ENCODE measurements at regions of chr1 and their contacts with region 1.

Region 1: GRCh38 chr1:207336559-207337467 is 15.3 kb downstream of the CD55 start:
- DNase-seq: peak; percentile 20 to 39 (median 32)
- H3K4me3 ChIP-seq: no peak overlapping the region
- H3K4me3 Mint-ChIP-seq: peak overlapping the region; percentile 7 to 75 (median 52)
- H3K27ac ChIP-seq: peak overlapping the region; percentile 37
- H3K27ac Mint-ChIP-seq: peak overlapping the region; percentile 49 to 90 (median 83)
- H3K4me1 ChIP-seq: peaks cover 44% of the 10 kb centered on the region
- H3K4me1 Mint-ChIP-seq: peaks cover 43 to 67% (median 57%) of the 10 kb centered on the region in 4 donors
- H3K27me3 ChIP-seq: no peaks in the 10 kb centered on the region
- H3K27me3 Mint-ChIP-seq: no peaks in the 10 kb centered on the region

Region 2: GRCh38 chr1:207084701-207085180 is 252.1 kb before region 1 on chr1:
- CTCF ChIA-PET with region 1: no interaction called
- POLR2A ChIA-PET with region 1: no interaction called
- intact Hi-C with region 1: loop called (anchors 1 kb)
- DNase-seq: peak; percentile 53 to 62 (median 58)
- H3K4me3 ChIP-seq: no peak overlapping the region
- H3K4me3 Mint-ChIP-seq: no peak overlapping the region
- H3K27ac ChIP-seq: no peak overlapping the region
- H3K27ac Mint-ChIP-seq: peak overlapping the region in 2 of 7 donors; percentile 17 to 25
- H3K4me1 ChIP-seq: no peaks in the 10 kb centered on the region
- H3K4me1 Mint-ChIP-seq: peaks cover 6 to 11% (median 9%) of the 10 kb centered on the region in 4 donors
- H3K27me3 ChIP-seq: no peaks in the 10 kb centered on the region
- H3K27me3 Mint-ChIP-seq: peaks cover 6 to 17% of the 10 kb centered on the region in 2 donors

Region 3: DNA sequence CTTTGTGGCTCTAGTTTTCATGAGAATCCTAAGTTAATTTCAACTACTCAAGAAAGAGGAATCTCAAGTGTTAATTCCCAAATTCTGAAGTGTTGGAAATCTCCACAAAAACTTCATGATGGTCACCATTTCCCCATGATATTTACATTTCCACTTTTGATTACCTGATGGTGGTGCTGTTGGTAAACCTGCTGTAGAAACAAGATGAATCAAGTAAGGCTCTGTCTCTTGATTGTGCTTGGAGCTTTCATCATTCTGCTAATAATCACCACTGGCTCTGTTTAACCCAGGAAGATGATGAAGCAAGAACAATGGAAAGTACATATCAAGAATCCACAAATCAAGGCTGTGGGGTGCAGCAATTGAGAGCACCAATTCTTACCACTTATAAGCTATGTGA is 155.0 kb before region 1 on chr1:
- CTCF ChIA-PET with region 1: no interaction called
- POLR2A ChIA-PET with region 1: no interaction called
- intact Hi-C with region 1: loop called (anchors 2 kb)
- DNase-seq: peak in 4 of 5 donors; percentile 2 to 25 (median 8)
- H3K4me3 ChIP-seq: no peak overlapping the region
- H3K4me3 Mint-ChIP-seq: no peak overlapping the region
- H3K27ac ChIP-seq: no peak overlapping the region
- H3K27ac Mint-ChIP-seq: no peak overlapping the region
- H3K4me1 ChIP-seq: no peaks in the 10 kb centered on the region
- H3K4me1 Mint-ChIP-seq: peaks cover 0 to 4% (median 0%) of the 10 kb centered on the region in 4 donors
- H3K27me3 ChIP-seq: no peaks in the 10 kb centered on the region
- H3K27me3 Mint-ChIP-seq: peaks cover 6 to 13% of the 10 kb centered on the region in 2 donors

Region 4: DNA sequence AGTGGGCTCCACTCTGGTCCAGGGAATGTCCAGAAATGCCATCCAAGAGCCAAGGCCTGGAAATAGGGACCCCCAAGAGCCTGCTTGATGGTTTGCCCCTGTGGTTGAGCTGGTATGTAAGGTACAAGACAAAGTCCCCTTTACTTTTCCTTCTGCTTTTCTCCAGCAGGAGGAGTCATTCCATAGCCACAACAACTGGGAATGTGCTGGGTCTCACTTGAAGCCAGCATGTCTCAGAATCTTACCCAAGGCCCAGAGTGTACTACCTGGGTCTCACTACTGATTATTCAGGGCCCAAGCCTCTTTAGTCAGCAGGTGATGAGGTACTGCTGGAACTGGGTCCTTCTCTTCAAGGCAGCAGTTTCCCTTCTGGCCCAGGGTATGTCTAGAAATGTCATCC is 77.4 kb before region 1 on chr1:
- CTCF ChIA-PET with region 1: no interaction called
- POLR2A ChIA-PET with region 1: no interaction called
- intact Hi-C with region 1: no loop called
- DNase-seq: no peak
- H3K4me3 ChIP-seq: no peak overlapping the region
- H3K4me3 Mint-ChIP-seq: no peak overlapping the region
- H3K27ac ChIP-seq: no peak overlapping the region
- H3K27ac Mint-ChIP-seq: no peak overlapping the region
- H3K4me1 ChIP-seq: no peaks in the 10 kb centered on the region
- H3K4me1 Mint-ChIP-seq: peaks cover 0 to 3% (median 0%) of the 10 kb centered on the region in 4 donors
- H3K27me3 ChIP-seq: no peaks in the 10 kb centered on the region
- H3K27me3 Mint-ChIP-seq: peaks cover 1 to 4% of the 10 kb centered on the region in 2 donors